Posterior vena cava (tissue), 2 donors: ENCODE measurements at regions of chr11 and their contacts with region 1.

Region 1: GRCh38 chr11:33970984-33971466 is 79.1 kb upstream of the LMO2 start:
- DNase-seq: no peak

Region 2: GRCh38 chr11:33857933-33858371 is 113.1 kb before region 1 on chr11:
- intact Hi-C with region 1: loop called (anchors 5 kb)
- DNase-seq: peak; percentile 93

Region 3: GRCh38 chr11:33863418-33864172 is 107.4 kb before region 1 on chr11:
- intact Hi-C with region 1: loop called (anchors 5 kb)
- DNase-seq: no peak